ENCODE measurements at regions of chr5 and their contacts with region 1.

Region 1: GRCh38 chr5:133423618-133424282 is 188.6 kb downstream of the FSTL4 start:
- DNase-seq: peak in 7 of 10 donors; percentile 28 to 72 (median 51)
- H3K4me3 ChIP-seq: no peak overlapping the region
- H3K27ac ChIP-seq: peak overlapping the region in 5 of 59 donors; percentile 6 to 44 (median 24)
- H3K27me3 ChIP-seq: no peaks in the 10 kb centered on the region
- CTCF ChIP-seq: peak; percentile 69 to 95 (median 92)

Region 2: DNA sequence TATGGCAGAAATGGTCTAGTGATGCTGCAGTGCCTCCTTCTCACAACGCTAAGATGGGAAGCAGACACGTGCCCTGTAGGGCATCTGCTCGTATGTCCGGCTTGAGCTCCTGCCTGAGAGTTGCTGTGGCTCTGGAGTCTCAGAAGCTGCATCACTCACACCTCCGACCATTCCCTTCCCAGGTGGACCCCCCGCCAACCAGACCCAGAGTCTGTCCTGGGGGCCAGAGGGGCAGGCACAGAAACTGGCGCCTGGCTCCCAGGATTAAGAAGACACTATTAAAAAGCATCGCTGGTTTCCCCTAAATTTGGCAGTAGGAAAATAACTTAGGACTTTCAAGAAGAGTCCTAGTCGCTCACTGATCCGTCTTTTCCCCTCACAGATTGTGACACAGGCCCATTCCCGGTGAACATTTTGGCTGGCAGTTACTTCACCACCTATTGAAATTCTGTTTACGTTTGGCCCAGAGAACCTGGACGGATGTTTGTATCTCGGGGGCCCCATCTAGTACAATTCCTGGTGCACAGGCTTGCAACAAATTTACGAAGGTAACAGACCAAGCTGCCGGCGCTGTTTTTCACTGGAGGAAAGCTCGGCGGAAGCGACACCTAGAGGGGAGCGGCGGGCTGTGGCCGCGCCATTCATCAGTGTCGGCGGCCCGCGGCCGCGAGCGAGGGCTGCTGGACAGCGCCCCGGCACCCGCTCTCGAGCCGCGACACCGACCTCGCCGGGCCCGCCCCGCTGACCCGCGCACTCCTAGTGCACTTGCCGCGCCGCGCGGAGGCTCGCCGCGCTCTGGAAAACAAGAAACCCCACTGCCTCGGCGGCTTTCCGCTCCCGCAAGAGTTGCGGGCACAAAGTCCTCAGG is 187.0 kb after region 1 on chr5:
- intact Hi-C with region 1: loop called in 1 of 2 experiments (anchors 10 kb)
- DNase-seq: peak in 9 of 10 donors; percentile 44 to 82 (median 64)
- H3K4me3 ChIP-seq: peak overlapping the region; percentile 37 to 76 (median 61)
- H3K27ac ChIP-seq: peak overlapping the region in 25 of 59 donors; percentile 10 to 80 (median 65)
- H3K27me3 ChIP-seq: peaks cover 0 to 68% (median 17%) of the 10 kb centered on the region in 45 donors
- CTCF ChIP-seq: peak in 55 of 56 donors; percentile 10 to 79 (median 63)

Region 3: GRCh38 chr5:133981714-133982113 is 558.0 kb after region 1 on chr5:
- intact Hi-C with region 1: loop called in 1 of 2 experiments (anchors 2 kb)
- DNase-seq: no peak
- H3K4me3 ChIP-seq: no peak overlapping the region
- H3K27ac ChIP-seq: peak overlapping the region in 1 of 59 donors; percentile 20
- H3K27me3 ChIP-seq: no peaks in the 10 kb centered on the region
- CTCF ChIP-seq: no peak